H1 (cell line): ENCODE measurements at regions of chr3 and their contacts with region 1.

Region 1: DNA sequence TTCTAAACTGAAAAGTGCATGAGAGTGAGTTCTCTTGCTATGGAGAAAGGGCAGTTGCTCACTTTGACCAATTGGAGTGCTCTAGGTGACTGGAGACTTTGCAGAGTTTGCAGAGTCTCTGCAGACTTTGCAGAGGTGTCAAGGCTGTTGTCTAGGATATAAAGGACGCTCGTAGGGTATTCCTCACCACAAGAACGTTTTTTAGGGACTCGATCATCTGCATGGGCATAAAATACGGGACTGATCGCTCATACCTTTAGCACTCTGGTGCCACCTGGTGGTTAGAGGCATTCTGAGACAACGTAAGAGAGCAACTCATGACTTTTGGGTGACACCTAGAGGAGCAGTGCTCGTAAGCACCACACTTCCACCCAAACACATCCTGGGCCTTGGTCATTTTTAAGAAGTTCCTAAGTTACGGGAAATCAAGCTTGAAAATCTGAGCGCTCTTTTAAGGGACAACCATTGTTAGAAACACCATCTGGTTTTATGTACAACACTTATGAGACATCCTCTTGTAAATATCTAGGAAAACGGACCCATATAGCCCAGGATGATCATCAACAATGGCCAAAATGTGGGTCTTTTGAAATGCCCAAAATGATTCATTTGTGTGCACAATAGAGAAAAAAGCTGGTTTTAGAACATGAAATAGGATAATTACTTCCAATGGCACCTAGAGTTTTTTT is 51.6 kb upstream of the XCR1 start:
- DNase-seq: peak; percentile 61 to 91
- H3K4me3 ChIP-seq: no peak overlapping the region
- H3K27ac ChIP-seq: no peak overlapping the region
- H3K4me1 ChIP-seq: no peaks in the 10 kb centered on the region
- H3K27me3 ChIP-seq: no peaks in the 10 kb centered on the region
- CTCF ChIP-seq: peak; percentile 54 to 100 (median 100)
- EP300 ChIP-seq: no peak
- POLR2A ChIP-seq: no peak
- RAD21 ChIP-seq: peak; percentile 98

Region 2: DNA sequence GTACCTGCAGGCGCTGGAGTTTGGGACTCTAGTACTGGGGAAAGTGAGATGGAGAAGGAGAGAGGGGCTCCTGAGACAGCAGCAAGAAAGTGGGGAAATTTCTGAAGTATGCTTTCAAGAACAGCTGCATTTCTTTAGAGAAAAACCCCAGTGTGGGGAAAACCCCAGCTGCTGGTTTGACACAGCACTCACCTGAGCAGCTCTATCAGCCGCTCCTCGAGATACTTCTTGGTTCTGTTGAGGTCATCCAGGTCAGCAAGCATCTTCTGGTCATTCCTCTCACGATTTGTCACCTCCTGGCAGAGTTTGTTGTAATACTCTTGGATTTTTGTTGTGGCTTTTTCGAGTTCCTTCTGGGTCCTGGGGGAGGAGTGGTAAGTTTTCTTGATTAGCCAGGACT is 116.8 kb before region 1 on chr3:
- CTCF ChIA-PET with region 1: interaction called, 30 read pairs
- POLR2A ChIA-PET with region 1: no interaction called
- DNase-seq: no peak
- H3K4me3 ChIP-seq: no peak overlapping the region
- H3K27ac ChIP-seq: no peak overlapping the region
- H3K4me1 ChIP-seq: no peaks in the 10 kb centered on the region
- H3K27me3 ChIP-seq: no peaks in the 10 kb centered on the region
- CTCF ChIP-seq: no peak
- EP300 ChIP-seq: no peak
- POLR2A ChIP-seq: no peak
- RAD21 ChIP-seq: no peak

Region 3: DNA sequence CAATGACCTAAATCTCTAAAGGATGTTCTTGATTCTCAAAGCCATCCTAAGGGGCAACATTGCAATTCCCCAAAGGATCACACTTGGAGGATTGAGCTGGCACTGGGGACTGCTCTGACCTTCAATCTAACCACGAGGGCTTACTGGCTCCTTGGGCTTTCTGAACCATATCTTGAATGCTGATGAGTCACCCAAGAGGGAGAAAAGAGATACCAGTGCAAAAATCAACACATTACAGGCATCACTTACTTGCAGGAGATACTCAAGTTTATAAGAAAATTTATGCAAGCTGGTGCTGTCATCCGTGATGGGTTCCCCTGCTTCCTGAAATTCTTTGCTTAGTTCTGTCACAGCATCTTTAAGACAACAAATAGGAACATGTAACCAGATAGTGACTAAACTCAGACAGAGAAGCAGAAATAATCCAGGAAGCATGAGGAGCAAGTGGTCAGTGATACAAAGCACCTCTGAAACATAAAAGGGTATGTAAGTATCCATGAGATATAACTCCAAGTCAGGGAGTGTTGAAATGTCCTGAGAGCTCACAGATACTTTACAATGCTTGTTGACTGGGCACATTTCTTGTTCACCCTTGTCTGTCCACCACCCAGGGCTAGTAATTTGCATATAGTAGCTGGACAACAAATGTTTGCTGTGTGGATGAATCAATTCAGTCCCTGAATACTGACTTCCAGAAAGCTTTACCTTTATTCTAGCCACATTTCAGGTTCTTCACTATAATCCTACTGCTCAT is 97.4 kb before region 1 on chr3:
- CTCF ChIA-PET with region 1: interaction called, 11 read pairs
- POLR2A ChIA-PET with region 1: no interaction called
- DNase-seq: no peak
- H3K4me3 ChIP-seq: no peak overlapping the region
- H3K27ac ChIP-seq: no peak overlapping the region
- H3K4me1 ChIP-seq: no peaks in the 10 kb centered on the region
- H3K27me3 ChIP-seq: no peaks in the 10 kb centered on the region
- CTCF ChIP-seq: no peak
- EP300 ChIP-seq: no peak
- POLR2A ChIP-seq: no peak
- RAD21 ChIP-seq: no peak

Region 4: GRCh38 chr3:46065294-46065721 is 13.5 kb before region 1 on chr3:
- CTCF ChIA-PET with region 1: interaction called, 92 read pairs
- POLR2A ChIA-PET with region 1: interaction called, 4 read pairs
- DNase-seq: no peak
- H3K4me3 ChIP-seq: no peak overlapping the region
- H3K27ac ChIP-seq: no peak overlapping the region
- H3K4me1 ChIP-seq: peaks cover 2 to 5% (median 3%) of the 10 kb centered on the region in 4 experiments; a peak in 3 of 7 replicates
- H3K27me3 ChIP-seq: no peaks in the 10 kb centered on the region
- CTCF ChIP-seq: no peak
- EP300 ChIP-seq: no peak
- POLR2A ChIP-seq: no peak
- RAD21 ChIP-seq: no peak

Region 5: GRCh38 chr3:46105306-46105919 is 26.6 kb after region 1 on chr3:
- CTCF ChIA-PET with region 1: interaction called, 22 read pairs
- POLR2A ChIA-PET with region 1: no interaction called
- DNase-seq: no peak
- H3K4me3 ChIP-seq: no peak overlapping the region
- H3K27ac ChIP-seq: no peak overlapping the region
- H3K4me1 ChIP-seq: no peaks in the 10 kb centered on the region
- H3K27me3 ChIP-seq: no peaks in the 10 kb centered on the region
- CTCF ChIP-seq: no peak
- EP300 ChIP-seq: no peak
- POLR2A ChIP-seq: no peak
- RAD21 ChIP-seq: no peak

Region 6: GRCh38 chr3:46312991-46313390 is 234.1 kb after region 1 on chr3:
- CTCF ChIA-PET with region 1: no interaction called
- POLR2A ChIA-PET with region 1: no interaction called
- DNase-seq: no peak
- H3K4me3 ChIP-seq: no peak overlapping the region
- H3K27ac ChIP-seq: no peak overlapping the region
- H3K4me1 ChIP-seq: peaks cover 0 to 3% (median 1%) of the 10 kb centered on the region in 4 experiments; a peak in 1 of 7 replicates
- H3K27me3 ChIP-seq: no peaks in the 10 kb centered on the region
- CTCF ChIP-seq: no peak
- EP300 ChIP-seq: no peak
- POLR2A ChIP-seq: no peak
- RAD21 ChIP-seq: no peak